GM12878 (cell line): ENCODE measurements at regions of chr9 and their contacts with region 1.

Region 1: GRCh38 chr9:137240861-137241489 is at the start of gene TUBB4B:
- DNase-seq: peak; percentile 100
- ATAC-seq: peak; percentile 86
- H3K4me3 ChIP-seq: peak within 1 kb of the TSS; percentile 98
- H3K27ac ChIP-seq: peak within 1 kb of the TSS; percentile 83
- H3K4me1 ChIP-seq: peaks cover 42% of the 10 kb centered on the region
- H3K27me3 ChIP-seq: no peaks in the 10 kb centered on the region
- CTCF ChIP-seq: no peak
- EP300 ChIP-seq: peak in 1 of 2 experiments; percentile 39; a peak in 2 of 4 replicates
- POLR2A ChIP-seq: no peak
- RAD21 ChIP-seq: no peak
- polyA plus RNA-seq, gene TUBB4B: 23.0 to 63.2 TPM

Region 2: DNA sequence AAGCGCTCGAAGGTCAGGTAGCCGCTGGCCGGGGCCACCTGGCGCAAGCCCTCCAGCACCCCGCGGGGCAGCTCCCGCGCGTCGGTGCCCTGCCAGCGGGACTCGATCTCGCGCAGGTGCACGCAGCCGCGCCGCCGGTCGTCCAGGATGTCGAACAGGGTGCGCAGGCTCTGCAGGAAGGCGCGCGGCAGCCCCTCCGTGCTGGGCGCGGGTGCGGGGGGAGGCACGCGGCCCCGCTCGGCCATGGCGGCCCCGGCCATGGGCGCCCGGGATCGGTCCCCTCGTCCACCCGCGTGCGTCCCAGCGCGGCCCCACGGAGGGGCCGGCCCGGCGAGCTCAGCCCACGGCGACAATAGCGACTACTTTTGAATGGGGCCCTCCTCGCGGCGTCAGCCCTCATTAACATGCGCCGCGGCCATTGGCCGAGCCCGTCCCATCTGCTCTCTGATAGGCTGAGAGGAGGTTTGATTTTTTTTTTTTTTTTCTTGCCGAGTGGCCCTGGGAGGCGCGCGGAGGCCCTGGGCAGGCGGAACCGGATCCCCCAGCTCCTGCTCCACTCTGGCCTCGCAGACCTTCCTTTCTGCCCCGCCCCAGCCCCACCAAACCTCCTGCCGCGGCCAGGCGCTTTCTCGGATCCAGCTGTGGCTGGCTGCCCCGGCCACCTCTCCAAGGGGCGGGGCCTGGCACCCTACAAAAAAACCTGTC is 170.6 kb before region 1 on chr9 and contains the start of gene SAPCD2:
- CTCF ChIA-PET with region 1: interaction called, 8 read pairs
- POLR2A ChIA-PET with region 1: interaction called, 6 read pairs
- RAD21 ChIA-PET with region 1: interaction called, 10 read pairs
- SMC1A ChIA-PET with region 1: interaction called, 3 read pairs
- in situ Hi-C with region 1: no loop called
- intact Hi-C with region 1: no loop called
- DNase-seq: no peak
- ATAC-seq: peak; percentile 88
- H3K4me3 ChIP-seq: peak within 1 kb of the TSS; percentile 80
- H3K27ac ChIP-seq: peak within 1 kb of the TSS; percentile 70
- H3K4me1 ChIP-seq: peaks cover 33% of the 10 kb centered on the region
- H3K27me3 ChIP-seq: no peaks in the 10 kb centered on the region
- CTCF ChIP-seq: no peak
- EP300 ChIP-seq: no peak
- POLR2A ChIP-seq: peak; percentile 69
- RAD21 ChIP-seq: no peak
- polyA plus RNA-seq, gene SAPCD2: 1.6 to 2.0 TPM

Region 3: DNA sequence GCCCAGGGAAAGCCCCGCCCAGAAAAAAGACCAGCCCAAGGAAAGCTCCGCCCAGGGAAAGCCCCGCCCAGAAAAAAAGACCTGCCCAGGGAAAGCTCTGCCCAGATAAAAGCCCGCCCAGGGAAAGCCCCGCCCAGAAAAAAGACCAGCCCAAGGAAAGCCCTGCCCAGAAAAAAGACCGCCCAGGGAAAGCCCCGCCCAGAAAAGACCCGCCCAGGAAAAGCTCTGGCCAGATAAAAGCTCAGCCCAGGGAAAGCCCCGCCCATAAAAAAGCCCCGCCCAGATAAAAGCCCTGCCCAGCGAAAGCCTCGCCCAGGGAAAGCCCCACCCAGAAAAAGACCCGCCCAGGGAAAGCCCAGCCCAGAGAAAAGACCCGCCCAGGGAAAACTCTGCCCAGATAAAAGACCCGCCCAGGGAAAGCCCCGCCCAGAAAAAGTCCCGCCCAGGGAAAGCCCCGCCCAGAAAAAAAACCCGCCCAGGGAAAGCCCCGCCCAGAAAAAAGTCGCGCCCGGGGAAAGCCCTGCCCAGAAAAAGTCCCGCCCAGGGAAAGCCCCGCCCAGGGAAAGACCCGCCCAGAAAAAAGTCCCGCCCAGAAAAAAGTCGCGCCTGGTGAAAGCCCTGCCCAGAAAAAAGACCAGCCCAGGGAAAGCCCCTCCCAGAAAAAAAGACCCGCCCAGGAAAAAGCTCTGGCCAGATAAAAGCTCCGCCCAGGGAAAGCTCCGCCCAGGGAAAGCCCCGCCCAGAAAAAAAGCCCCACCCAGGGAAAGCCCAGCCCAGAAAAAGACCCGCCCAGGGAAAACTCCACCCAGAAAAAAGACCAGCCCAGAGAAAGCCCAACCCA is 90.1 kb before region 1 on chr9:
- CTCF ChIA-PET with region 1: interaction called, 5 read pairs
- POLR2A ChIA-PET with region 1: interaction called, 15 read pairs
- RAD21 ChIA-PET with region 1: interaction called, 11 read pairs
- SMC1A ChIA-PET with region 1: interaction called, 3 read pairs
- in situ Hi-C with region 1: no loop called
- intact Hi-C with region 1: no loop called
- DNase-seq: no peak
- ATAC-seq: peak; percentile 74
- H3K4me3 ChIP-seq: 0 out of 2 replicates have a peak overlapping the region, but pooled peaks have one; percentile 12
- H3K27ac ChIP-seq: peak overlapping the region; percentile 44
- H3K4me1 ChIP-seq: peaks cover 9% of the 10 kb centered on the region; the same call in 1 of the 2 replicates
- H3K27me3 ChIP-seq: no peaks in the 10 kb centered on the region
- CTCF ChIP-seq: no peak
- EP300 ChIP-seq: no peak
- POLR2A ChIP-seq: no peak
- RAD21 ChIP-seq: no peak

Region 4: GRCh38 chr9:137223078-137223970 is 17.7 kb before region 1 on chr9:
- CTCF ChIA-PET with region 1: interaction called, 52 read pairs
- POLR2A ChIA-PET with region 1: interaction called, 15 read pairs
- RAD21 ChIA-PET with region 1: interaction called, 15 read pairs
- SMC1A ChIA-PET with region 1: interaction called, 4 read pairs
- in situ Hi-C with region 1: no loop called
- intact Hi-C with region 1: no loop called
- DNase-seq: peak; percentile 93
- ATAC-seq: peak; percentile 87
- H3K4me3 ChIP-seq: peak overlapping the region; percentile 93
- H3K27ac ChIP-seq: peak overlapping the region; percentile 73
- H3K4me1 ChIP-seq: peaks cover 16% of the 10 kb centered on the region
- H3K27me3 ChIP-seq: no peaks in the 10 kb centered on the region
- CTCF ChIP-seq: no peak
- EP300 ChIP-seq: no peak
- POLR2A ChIP-seq: peak; percentile 79
- RAD21 ChIP-seq: no peak

Region 5: GRCh38 chr9:137269231-137269772 is 28.3 kb after region 1 on chr9:
- CTCF ChIA-PET with region 1: interaction called, 11 read pairs
- POLR2A ChIA-PET with region 1: interaction called, 4 read pairs
- RAD21 ChIA-PET with region 1: interaction called, 4 read pairs
- SMC1A ChIA-PET with region 1: no interaction called
- in situ Hi-C with region 1: no loop called
- intact Hi-C with region 1: no loop called
- DNase-seq: peak; percentile 34
- ATAC-seq: peak; percentile 64
- H3K4me3 ChIP-seq: peak overlapping the region; percentile 46; the same call in 1 of the 2 replicates
- H3K27ac ChIP-seq: peak overlapping the region; percentile 47
- H3K4me1 ChIP-seq: peaks cover 22% of the 10 kb centered on the region
- H3K27me3 ChIP-seq: no peaks in the 10 kb centered on the region
- CTCF ChIP-seq: no peak
- EP300 ChIP-seq: no peak
- POLR2A ChIP-seq: no peak; the same call in 1 of the 2 replicates
- RAD21 ChIP-seq: no peak

Region 6: GRCh38 chr9:137461663-137462395 is 220.9 kb after region 1 on chr9:
- CTCF ChIA-PET with region 1: no interaction called
- POLR2A ChIA-PET with region 1: no interaction called
- RAD21 ChIA-PET with region 1: no interaction called
- SMC1A ChIA-PET with region 1: no interaction called
- in situ Hi-C with region 1: no loop called
- intact Hi-C with region 1: no loop called
- DNase-seq: peak; percentile 49
- ATAC-seq: peak; percentile 80
- H3K4me3 ChIP-seq: peak overlapping the region; percentile 36; the same call in 1 of the 2 replicates
- H3K27ac ChIP-seq: peak overlapping the region; percentile 22; the same call in 1 of the 2 replicates
- H3K4me1 ChIP-seq: peaks cover 26% of the 10 kb centered on the region
- H3K27me3 ChIP-seq: no peaks in the 10 kb centered on the region
- CTCF ChIP-seq: peak in 2 of 3 experiments; percentile 11 to 35; a peak in 4 of 6 replicates
- EP300 ChIP-seq: 0 out of 4 replicates have a peak, but pooled peaks of 1 of the 2 experiments have one; percentile 17
- POLR2A ChIP-seq: no peak
- RAD21 ChIP-seq: no peak